ENCODE measurements at regions of chr9 and their contacts with region 1.

Region 1: DNA sequence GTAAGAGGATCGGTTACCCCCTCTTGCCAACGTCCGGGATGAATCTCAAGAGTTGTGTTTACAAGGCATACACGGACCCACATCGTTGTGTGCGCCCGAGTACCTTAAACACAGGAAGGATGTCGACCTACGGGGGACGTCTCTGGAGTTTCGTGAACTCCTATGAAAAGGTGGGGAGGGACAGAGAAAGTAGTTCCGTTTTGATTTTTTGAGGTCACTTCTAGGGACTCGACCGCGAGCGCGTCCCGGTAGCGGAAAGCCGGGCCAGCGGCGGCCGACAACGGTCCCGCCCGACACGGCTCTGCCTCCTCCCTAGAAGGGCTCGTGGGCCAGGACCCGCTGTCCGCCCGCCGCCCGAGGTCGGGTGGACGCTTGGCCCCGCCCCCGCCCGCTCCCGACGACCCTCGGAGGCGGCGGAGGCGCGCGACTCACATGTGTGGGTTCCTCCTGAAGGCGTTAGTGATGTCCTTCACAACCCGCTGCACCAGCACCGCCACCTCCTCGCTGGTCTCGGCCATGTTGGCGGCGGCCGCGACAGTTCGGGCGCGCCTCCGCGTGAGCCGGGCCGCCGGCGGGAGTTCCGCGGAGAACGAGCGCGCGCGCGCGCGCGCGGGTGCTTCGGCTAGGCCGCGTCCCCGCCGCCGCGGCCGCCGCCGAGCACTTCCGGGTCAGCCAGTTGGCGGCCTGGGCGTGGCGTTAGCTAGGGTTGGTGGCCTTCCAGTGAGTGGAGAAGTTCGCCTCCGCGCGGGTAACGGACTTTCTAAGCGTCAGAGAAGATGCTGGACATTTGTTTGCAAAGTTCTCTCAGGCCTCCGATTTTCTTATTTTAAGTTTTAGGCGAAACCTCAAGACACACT is at the start of gene PTAR1:
- DNase-seq: peak; percentile 89 to 95
- ATAC-seq: peak; percentile 84 to 94 (median 84)
- H3K4me3 ChIP-seq: peak within 1 kb of the TSS; percentile 56
- H3K4me3 Mint-ChIP-seq: peak within 1 kb of the TSS; percentile 99
- H3K27ac ChIP-seq: peak within 1 kb of the TSS; percentile 92
- H3K27ac Mint-ChIP-seq: peak within 1 kb of the TSS; percentile 96 to 97
- H3K4me1 ChIP-seq: peaks cover 8% of the 10 kb centered on the region
- H3K4me1 Mint-ChIP-seq: peaks cover 26 to 39% of the 10 kb centered on the region in 2 donors
- H3K27me3 ChIP-seq: no peaks in the 10 kb centered on the region
- H3K27me3 Mint-ChIP-seq: no peaks in the 10 kb centered on the region
- CTCF ChIP-seq: no peak
- total RNA-seq, gene PTAR1: 76.4 to 87.9 (median 85.6) TPM

Region 2: DNA sequence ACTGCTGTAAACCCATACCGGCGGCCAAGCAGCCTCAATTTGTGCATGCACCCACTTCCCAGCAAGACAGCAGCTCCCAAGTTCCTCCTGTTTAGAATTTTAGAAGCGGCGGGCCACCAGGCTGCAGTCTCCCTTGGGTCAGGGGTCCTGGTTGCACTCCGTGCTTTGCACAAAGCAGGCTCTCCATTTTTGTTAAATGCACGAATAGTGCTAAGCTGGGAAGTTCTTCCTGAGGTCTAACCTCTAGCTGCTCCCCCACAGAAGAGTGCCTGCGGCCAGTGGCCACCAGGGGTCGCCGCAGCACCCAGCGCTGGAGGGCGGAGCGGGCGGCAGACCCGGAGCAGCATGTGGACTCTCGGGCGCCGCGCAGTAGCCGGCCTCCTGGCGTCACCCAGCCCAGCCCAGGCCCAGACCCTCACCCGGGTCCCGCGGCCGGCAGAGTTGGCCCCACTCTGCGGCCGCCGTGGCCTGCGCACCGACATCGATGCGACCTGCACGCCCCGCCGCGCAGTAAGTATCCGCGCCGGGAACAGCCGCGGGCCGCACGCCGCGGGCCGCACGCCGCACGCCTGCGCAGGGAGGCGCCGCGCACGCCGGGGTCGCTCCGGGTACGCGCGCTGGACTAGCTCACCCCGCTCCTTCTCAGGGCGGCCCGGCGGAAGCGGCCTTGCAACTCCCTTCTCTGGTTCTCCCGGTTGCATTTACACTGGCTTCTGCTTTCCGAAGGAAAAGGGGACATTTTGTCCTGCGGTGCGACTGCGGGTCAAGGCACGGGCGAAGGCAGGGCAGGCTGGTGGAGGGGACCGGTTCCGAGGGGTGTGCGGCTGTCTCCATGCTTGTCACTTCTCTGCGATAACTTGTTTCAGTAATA is 724.0 kb before region 1 on chr9 and contains the start of gene FXN:
- intact Hi-C with region 1: loop called (anchors 5 kb)
- DNase-seq: peak; percentile 79 to 88
- ATAC-seq: peak; percentile 89 to 95 (median 89)
- H3K4me3 ChIP-seq: peak within 1 kb of the TSS; percentile 78
- H3K4me3 Mint-ChIP-seq: peak within 1 kb of the TSS; percentile 98
- H3K27ac ChIP-seq: peak within 1 kb of the TSS; percentile 34
- H3K27ac Mint-ChIP-seq: peak within 1 kb of the TSS; percentile 92 to 93
- H3K4me1 ChIP-seq: peaks cover 14% of the 10 kb centered on the region
- H3K4me1 Mint-ChIP-seq: peaks cover 10 to 15% of the 10 kb centered on the region in 2 donors
- H3K27me3 ChIP-seq: no peaks in the 10 kb centered on the region
- H3K27me3 Mint-ChIP-seq: no peaks in the 10 kb centered on the region
- CTCF ChIP-seq: peak; percentile 90
- total RNA-seq, gene FXN: 11.5 to 19.4 (median 18.9) TPM

Region 3: DNA sequence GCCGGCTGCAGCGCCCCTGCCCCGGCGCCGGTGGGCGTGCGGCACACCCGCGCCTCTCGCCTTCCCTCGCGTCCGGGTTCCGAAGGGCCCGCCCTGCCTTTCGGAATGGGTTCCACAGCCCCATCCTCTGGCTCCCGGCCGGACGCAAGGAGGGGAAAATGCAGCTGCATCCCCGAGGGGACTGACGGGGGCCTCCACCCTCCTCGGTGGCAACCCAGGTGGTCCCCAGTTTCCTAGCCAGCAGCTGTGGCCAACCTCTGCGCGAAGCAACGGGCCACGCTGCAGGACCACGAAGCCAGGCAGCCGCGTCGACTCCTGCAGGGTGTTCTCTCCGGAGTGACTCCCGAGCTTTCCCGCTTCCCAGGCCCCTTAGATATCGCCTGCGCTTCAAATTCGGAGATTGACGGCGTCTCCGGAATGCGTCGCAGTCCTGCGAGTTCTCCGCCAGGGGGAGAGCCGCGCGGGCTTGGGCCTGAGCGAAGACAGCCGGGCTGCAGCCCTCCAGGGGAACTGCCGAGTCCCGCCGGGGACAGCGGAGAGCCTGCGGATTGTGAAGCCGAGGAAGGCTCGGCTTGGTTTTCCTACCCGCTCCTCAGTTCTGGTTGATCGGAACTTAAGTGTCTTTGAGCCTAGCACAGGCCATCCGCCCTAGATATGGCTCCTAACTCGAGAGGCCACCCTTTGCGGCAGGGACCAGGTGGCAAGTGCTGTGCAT is 86.9 kb before region 1 on chr9:
- intact Hi-C with region 1: loop called (anchors 5 kb)
- DNase-seq: peak; percentile 42 to 78
- ATAC-seq: peak; percentile 83 to 87 (median 85)
- H3K4me3 ChIP-seq: peak overlapping the region; percentile 66
- H3K4me3 Mint-ChIP-seq: peak overlapping the region; percentile 90
- H3K27ac ChIP-seq: no peak overlapping the region
- H3K27ac Mint-ChIP-seq: no peak overlapping the region
- H3K4me1 ChIP-seq: peaks cover 13% of the 10 kb centered on the region
- H3K4me1 Mint-ChIP-seq: peaks cover 8 to 13% of the 10 kb centered on the region in 2 donors
- H3K27me3 ChIP-seq: peaks cover 8% of the 10 kb centered on the region
- H3K27me3 Mint-ChIP-seq: peaks cover 0 to 20% of the 10 kb centered on the region in 2 donors
- CTCF ChIP-seq: peak; percentile 72

Region 4: GRCh38 chr9:70258692-70259511 is 499.3 kb after region 1 on chr9 and contains the start of gene SMC5:
- intact Hi-C with region 1: loop called (anchors 2 kb)
- DNase-seq: peak; percentile 90 to 96
- ATAC-seq: peak; percentile 88 to 96 (median 91)
- H3K4me3 ChIP-seq: peak within 1 kb of the TSS; percentile 96
- H3K4me3 Mint-ChIP-seq: peak within 1 kb of the TSS; percentile 94
- H3K27ac ChIP-seq: peak within 1 kb of the TSS; percentile 96
- H3K27ac Mint-ChIP-seq: peak within 1 kb of the TSS; percentile 90 to 94
- H3K4me1 ChIP-seq: peaks cover 24% of the 10 kb centered on the region
- H3K4me1 Mint-ChIP-seq: peaks cover 42 to 46% of the 10 kb centered on the region in 2 donors
- H3K27me3 ChIP-seq: no peaks in the 10 kb centered on the region
- H3K27me3 Mint-ChIP-seq: no peaks in the 10 kb centered on the region
- CTCF ChIP-seq: no peak
- total RNA-seq, gene SMC5: 35.0 to 41.0 (median 40.9) TPM